ENCODE measurements at regions of chr17 and their contacts with region 1.

Region 1: GRCh38 chr17:81018044-81018802 is 16.7 kb upstream of the BAIAP2 start:
- DNase-seq: peak; percentile 47
- ATAC-seq: peak; percentile 82
- H3K4me3 ChIP-seq: peak overlapping the region; percentile 48 to 76 (median 60)
- H3K4me3 Mint-ChIP-seq: peak overlapping the region; percentile 86
- H3K27ac ChIP-seq: peak overlapping the region; percentile 68 to 77
- H3K27ac Mint-ChIP-seq: peak overlapping the region; percentile 89
- H3K4me1 ChIP-seq: peaks cover 9 to 15% of the 10 kb centered on the region in 2 donors
- H3K4me1 Mint-ChIP-seq: peaks cover 16% of the 10 kb centered on the region
- H3K27me3 ChIP-seq: no peaks in the 10 kb centered on the region
- H3K27me3 Mint-ChIP-seq: no peaks in the 10 kb centered on the region
- CTCF ChIP-seq: no peak

Region 2: GRCh38 chr17:80981062-80981902 is 36.9 kb before region 1 on chr17:
- CTCF ChIA-PET with region 1: no interaction called
- POLR2A ChIA-PET with region 1: no interaction called
- intact Hi-C with region 1: loop called (anchors 5 kb)
- DNase-seq: peak; percentile 67
- ATAC-seq: peak; percentile 72
- H3K4me3 ChIP-seq: peak overlapping the region in 2 of 5 experiments; percentile 2 to 23
- H3K4me3 Mint-ChIP-seq: peak overlapping the region; percentile 69
- H3K27ac ChIP-seq: no peak overlapping the region
- H3K27ac Mint-ChIP-seq: no peak overlapping the region
- H3K4me1 ChIP-seq: peaks cover 12 to 17% of the 10 kb centered on the region in 2 donors
- H3K4me1 Mint-ChIP-seq: peaks cover 12% of the 10 kb centered on the region
- H3K27me3 ChIP-seq: no peaks in the 10 kb centered on the region
- H3K27me3 Mint-ChIP-seq: peaks cover 9% of the 10 kb centered on the region
- CTCF ChIP-seq: peak; percentile 94

Region 3: GRCh38 chr17:81034779-81035388 is 16.7 kb after region 1 on chr17 and contains the start of gene BAIAP2:
- CTCF ChIA-PET with region 1: interaction called, 8 read pairs
- POLR2A ChIA-PET with region 1: interaction called, 3 read pairs
- intact Hi-C with region 1: loop called (anchors 2 kb)
- DNase-seq: peak; percentile 94
- ATAC-seq: peak; percentile 85
- H3K4me3 ChIP-seq: peak within 1 kb of the TSS; percentile 21 to 70 (median 61)
- H3K4me3 Mint-ChIP-seq: peak within 1 kb of the TSS; percentile 95
- H3K27ac ChIP-seq: no peak within 1 kb of the TSS
- H3K27ac Mint-ChIP-seq: peak within 1 kb of the TSS; percentile 90
- H3K4me1 ChIP-seq: peaks cover 12 to 16% of the 10 kb centered on the region in 2 donors
- H3K4me1 Mint-ChIP-seq: peaks cover 13% of the 10 kb centered on the region
- H3K27me3 ChIP-seq: peaks cover 0 to 68% (median 14%) of the 10 kb centered on the region in 4 experiments
- H3K27me3 Mint-ChIP-seq: peaks cover 55% of the 10 kb centered on the region
- CTCF ChIP-seq: no peak
- total RNA-seq, gene BAIAP2: 11.2 and 12.0 TPM in 2 replicates

Region 4: DNA sequence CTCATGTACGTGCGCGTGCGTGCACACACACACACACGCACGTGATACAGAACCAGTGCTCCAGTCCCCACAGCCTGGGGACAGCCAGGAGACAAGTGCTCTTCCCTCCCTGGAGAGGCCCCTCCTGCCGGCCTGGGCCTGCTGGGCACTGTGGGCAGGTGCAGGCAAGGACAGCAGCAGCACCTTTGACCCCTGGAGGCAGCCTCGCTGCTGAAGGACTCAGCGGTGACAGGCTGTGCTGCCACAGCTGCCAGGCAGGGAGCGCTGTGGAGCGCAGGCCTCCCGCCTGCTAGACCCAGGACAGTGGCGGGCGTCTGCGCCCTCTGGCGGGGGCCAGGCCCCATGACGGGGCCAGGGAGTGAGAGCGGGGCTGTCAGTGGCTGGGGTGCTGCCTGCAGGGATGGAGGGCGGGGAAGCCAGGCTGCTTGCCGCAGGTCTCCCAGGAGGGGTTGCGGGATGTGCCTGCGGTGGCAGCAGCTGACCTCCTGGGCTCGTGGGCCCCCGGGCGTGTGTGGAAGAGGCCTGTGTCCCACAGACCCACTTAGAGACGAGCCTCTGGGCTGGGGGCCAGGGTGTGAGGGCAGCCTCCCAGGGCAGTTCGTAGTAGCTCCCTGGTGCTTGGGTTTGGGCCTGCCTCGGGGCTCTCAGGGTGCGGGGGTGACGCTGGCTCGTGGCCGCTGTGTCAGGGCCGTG is 83.5 kb after region 1 on chr17:
- CTCF ChIA-PET with region 1: interaction called, 36 read pairs
- POLR2A ChIA-PET with region 1: no interaction called
- intact Hi-C with region 1: loop called (anchors 1 kb)
- DNase-seq: peak; percentile 89
- ATAC-seq: peak; percentile 100
- H3K4me3 ChIP-seq: no peak overlapping the region
- H3K4me3 Mint-ChIP-seq: no peak overlapping the region
- H3K27ac ChIP-seq: no peak overlapping the region
- H3K27ac Mint-ChIP-seq: no peak overlapping the region
- H3K4me1 ChIP-seq: peaks cover 0 to 7% of the 10 kb centered on the region in 2 donors
- H3K4me1 Mint-ChIP-seq: no peaks in the 10 kb centered on the region
- H3K27me3 ChIP-seq: peaks cover 0 to 17% (median 2%) of the 10 kb centered on the region in 4 experiments
- H3K27me3 Mint-ChIP-seq: peaks cover 4% of the 10 kb centered on the region
- CTCF ChIP-seq: peak; percentile 100

Measured in B cell (primary cell).